Activated CD4-positive, alpha-beta memory T cell treated with anti-CD3 and anti-CD28 coated beads for 36 hours (primary cell): ENCODE measurements at regions of chr7 and their contacts with region 1.

Region 1: GRCh38 chr7:25894902-25895791 is 256.9 kb upstream of the NFE2L3 start:
- DNase-seq: peak; percentile 75
- H3K4me3 Mint-ChIP-seq: peak overlapping the region; percentile 44
- H3K27ac Mint-ChIP-seq: no peak overlapping the region
- H3K4me1 Mint-ChIP-seq: peaks cover 26% of the 10 kb centered on the region
- H3K27me3 Mint-ChIP-seq: peaks cover 1% of the 10 kb centered on the region

Region 2: GRCh38 chr7:25726170-25726780 is 168.9 kb before region 1 on chr7:
- CTCF ChIA-PET with region 1: no interaction called
- POLR2A ChIA-PET with region 1: no interaction called
- intact Hi-C with region 1: no loop called
- DNase-seq: no peak
- H3K4me3 Mint-ChIP-seq: no peak overlapping the region
- H3K27ac Mint-ChIP-seq: no peak overlapping the region
- H3K4me1 Mint-ChIP-seq: no peaks in the 10 kb centered on the region
- H3K27me3 Mint-ChIP-seq: no peaks in the 10 kb centered on the region

Region 3: GRCh38 chr7:25908154-25908949 is 13.2 kb after region 1 on chr7:
- CTCF ChIA-PET with region 1: interaction called, 67 read pairs
- POLR2A ChIA-PET with region 1: no interaction called
- intact Hi-C with region 1: no loop called
- DNase-seq: no peak
- H3K4me3 Mint-ChIP-seq: no peak overlapping the region
- H3K27ac Mint-ChIP-seq: no peak overlapping the region
- H3K4me1 Mint-ChIP-seq: peaks cover 11% of the 10 kb centered on the region
- H3K27me3 Mint-ChIP-seq: peaks cover 16% of the 10 kb centered on the region

Region 4: DNA sequence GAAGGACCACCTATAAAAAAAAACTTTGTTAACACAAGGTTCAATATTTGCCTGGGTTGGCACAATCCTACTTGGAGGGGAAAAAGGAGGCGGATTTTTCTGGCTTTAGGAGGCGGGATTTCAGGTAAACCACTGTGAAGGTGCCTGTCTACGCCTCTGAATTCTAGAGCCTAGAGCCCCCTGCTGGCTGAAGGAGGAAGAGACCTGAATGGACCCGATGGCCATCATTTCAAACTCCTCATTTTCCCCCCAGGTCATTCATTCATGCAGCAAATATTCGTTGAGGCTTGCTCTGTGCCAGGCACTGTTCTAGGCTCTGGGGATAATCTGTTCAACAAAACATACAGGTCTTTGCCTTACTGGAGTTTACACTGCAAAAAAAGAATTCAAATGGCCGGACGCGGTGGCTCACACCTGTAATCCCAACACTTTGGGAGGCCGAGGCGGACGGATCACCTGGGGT is 166.6 kb after region 1 on chr7:
- CTCF ChIA-PET with region 1: interaction called, 100 read pairs
- POLR2A ChIA-PET with region 1: no interaction called
- intact Hi-C with region 1: loop called (anchors 1 kb)
- DNase-seq: peak; percentile 82
- H3K4me3 Mint-ChIP-seq: no peak overlapping the region
- H3K27ac Mint-ChIP-seq: no peak overlapping the region
- H3K4me1 Mint-ChIP-seq: peaks cover 5% of the 10 kb centered on the region
- H3K27me3 Mint-ChIP-seq: peaks cover 16% of the 10 kb centered on the region

Region 5: GRCh38 chr7:26151953-26152781 is 257.0 kb after region 1 on chr7 and contains the start of gene NFE2L3:
- CTCF ChIA-PET with region 1: interaction called, 13 read pairs
- POLR2A ChIA-PET with region 1: no interaction called
- intact Hi-C with region 1: loop called (anchors 5 kb)
- DNase-seq: peak; percentile 90
- H3K4me3 Mint-ChIP-seq: peak within 1 kb of the TSS; percentile 98
- H3K27ac Mint-ChIP-seq: peak within 1 kb of the TSS; percentile 92
- H3K4me1 Mint-ChIP-seq: peaks cover 51% of the 10 kb centered on the region
- H3K27me3 Mint-ChIP-seq: no peaks in the 10 kb centered on the region
- total RNA-seq, gene NFE2L3: 27.3 to 30.3 TPM

Region 6: DNA sequence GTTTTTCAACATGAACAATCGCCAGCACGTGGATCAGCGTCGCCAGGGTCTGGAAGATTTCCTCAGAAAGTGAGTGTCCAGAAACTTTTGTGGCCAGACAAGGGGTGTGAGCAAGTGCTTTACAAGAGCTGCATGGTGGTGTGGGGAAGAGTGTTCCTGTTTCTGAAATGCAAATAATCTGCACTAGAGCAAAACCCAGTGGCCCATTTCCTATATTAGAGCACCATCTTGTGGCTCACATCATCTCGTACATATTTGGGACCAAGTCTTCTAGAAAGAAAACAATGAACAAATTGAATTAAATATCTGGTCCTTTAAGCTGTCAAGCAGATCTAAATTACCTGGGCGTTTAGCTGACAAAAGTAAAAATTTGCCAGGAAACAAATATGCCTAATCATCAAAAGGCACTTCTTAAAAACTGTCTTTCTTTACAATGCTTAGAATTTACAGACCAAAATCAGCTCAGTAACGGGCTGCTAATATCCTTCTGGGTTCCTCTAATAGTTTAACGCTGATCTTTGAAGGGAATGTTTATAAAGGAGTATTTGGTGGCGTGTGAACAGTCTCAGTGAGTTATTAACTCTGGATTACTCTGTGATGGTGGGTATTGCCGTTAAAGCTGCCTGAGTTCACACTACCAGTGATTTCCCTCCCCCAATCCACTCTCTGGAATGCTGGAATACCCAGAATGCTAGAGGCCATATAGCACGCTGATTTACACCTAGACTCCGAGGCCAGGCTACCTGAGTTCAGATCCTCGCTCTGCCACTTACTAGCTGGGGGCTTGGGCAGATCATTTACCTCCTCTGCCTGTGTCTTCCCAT is 470.1 kb after region 1 on chr7:
- CTCF ChIA-PET with region 1: interaction called, 87 read pairs
- POLR2A ChIA-PET with region 1: no interaction called
- intact Hi-C with region 1: loop called (anchors 2 kb)
- DNase-seq: peak; percentile 51
- H3K4me3 Mint-ChIP-seq: no peak overlapping the region
- H3K27ac Mint-ChIP-seq: peak overlapping the region; percentile 31
- H3K4me1 Mint-ChIP-seq: peaks cover 12% of the 10 kb centered on the region
- H3K27me3 Mint-ChIP-seq: no peaks in the 10 kb centered on the region

Region 7: GRCh38 chr7:26864309-26865093 is 969.4 kb after region 1 on chr7 and contains the start of gene SKAP2:
- CTCF ChIA-PET with region 1: no interaction called
- POLR2A ChIA-PET with region 1: no interaction called
- intact Hi-C with region 1: loop called (anchors 10 kb)
- DNase-seq: peak; percentile 94
- H3K4me3 Mint-ChIP-seq: peak within 1 kb of the TSS; percentile 95
- H3K27ac Mint-ChIP-seq: peak within 1 kb of the TSS; percentile 74
- H3K4me1 Mint-ChIP-seq: peaks cover 18% of the 10 kb centered on the region
- H3K27me3 Mint-ChIP-seq: peaks cover 27% of the 10 kb centered on the region
- total RNA-seq, gene SKAP2: 11.2 to 11.9 TPM